ENCODE measurements at regions of chr3 and their contacts with region 1.

Region 1: DNA sequence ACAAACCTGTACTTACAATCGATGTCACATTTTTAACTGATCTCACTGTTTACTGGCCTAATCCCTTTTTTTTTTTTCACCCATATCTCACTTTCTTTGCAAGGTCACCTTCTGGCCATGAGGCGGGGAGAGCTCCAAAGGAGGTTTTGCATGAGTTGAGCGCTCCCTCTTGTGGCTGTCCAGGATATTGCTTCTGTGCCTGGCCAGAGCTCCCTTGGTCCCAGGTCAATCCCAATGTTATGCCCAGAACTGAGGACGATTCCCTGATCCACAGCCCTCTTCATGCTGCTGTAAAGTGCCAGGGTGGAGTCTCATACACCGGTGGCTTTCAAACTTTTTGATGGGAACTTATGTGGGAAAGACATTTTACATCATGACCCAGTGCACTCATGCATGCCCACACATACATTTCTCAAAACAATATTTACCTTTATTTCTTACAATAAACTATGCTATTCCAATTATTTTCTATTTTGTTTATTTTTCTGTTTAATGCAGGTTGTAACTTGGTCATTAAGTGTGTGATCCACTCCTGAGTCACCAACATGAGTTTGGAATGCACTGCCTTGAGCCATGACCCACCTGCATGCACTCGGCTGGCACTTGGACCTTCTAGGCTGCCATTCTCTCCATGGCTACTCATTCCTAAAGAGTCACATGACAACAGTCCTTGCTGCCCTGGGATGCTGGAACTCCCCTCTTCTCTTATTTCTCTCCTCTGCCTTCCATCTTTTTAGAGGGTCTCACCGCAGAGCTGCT is 9.6 kb upstream of the SST start:
- DNase-seq: peak; percentile 42 to 94 (median 79)

Region 2: DNA sequence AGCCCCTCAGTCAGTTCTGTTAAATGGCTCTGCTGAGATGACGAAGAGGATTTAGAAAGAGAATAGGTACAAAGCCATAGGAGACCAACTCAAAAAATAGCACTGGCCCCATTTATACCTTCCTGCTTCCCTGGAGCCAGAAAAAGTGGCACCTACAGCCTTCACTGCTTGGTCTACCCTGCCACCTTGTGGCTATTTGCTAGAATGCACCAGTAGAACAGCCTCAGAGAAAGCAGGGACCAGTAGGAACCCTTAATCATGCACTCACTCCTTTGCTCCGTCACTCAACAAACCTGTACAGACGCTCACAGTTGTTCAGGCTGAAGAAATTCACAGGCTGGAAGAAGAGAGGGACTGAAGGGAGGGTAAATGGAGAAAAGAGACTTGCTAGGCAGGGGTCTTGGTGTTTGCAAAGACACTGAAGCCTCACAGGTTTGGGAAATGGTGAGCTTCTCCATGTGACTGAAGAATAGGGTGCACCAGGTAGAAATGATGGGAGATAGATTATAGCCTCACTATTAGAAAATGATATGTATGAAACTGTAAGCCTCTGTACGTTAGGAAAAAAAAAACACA is 34.7 kb after region 1 on chr3:
- intact Hi-C with region 1: loop called (anchors 2 kb)
- DNase-seq: peak in 8 of 10 donors; percentile 46 to 87 (median 76)

Region 3: DNA sequence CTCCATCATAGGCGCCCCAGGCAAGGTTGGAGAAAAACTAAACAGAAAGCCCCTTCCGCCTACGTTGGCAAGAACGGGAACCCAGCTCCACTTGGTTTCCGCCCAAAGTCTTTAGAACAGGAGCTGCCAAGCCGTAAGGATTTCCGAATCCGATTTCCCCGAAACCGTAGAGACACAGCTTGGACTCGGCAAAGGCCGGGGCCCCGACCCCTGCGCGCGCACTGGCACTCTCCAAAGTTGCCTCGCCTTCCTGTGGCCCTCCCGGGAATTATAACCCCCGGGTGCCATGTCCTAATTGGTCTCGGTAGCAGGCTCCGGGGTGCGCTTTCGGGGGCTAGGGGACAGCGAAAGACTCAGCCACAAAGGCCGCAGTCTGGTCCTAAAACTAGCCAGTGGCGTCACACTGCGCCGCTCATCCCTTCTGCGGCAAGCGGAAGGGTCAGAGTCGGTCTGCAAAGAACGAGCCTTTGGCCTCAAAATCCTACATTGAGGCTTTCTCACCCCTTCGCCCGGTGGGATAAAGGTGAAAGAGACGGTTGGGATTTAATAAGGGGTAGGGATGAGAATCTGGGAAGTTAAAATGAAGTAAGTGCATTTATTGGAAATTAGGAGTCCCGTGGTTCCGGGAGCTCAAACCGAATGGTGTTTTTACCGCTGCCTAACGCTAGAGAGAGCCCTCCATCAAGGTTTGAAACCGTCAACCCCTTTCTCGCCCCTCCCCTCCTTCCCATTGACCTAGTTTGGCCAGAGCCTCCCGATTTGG is 58.7 kb after region 1 on chr3:
- intact Hi-C with region 1: no loop called
- DNase-seq: peak; percentile 73 to 96 (median 80)